Activated CD8-positive, alpha-beta memory T cell treated with anti-CD3 and anti-CD28 coated beads, Interleukin-2, amount 10 ng/mL, durations not matched to agents 7 days and 5 days (primary cell): ENCODE measurements at regions of chr6 and their contacts with region 1.

Region 1: GRCh38 chr6:85460921-85461797 is 11.3 kb downstream of the NT5E start:
- DNase-seq: peak; percentile 88
- ATAC-seq: peak; percentile 74
- H3K4me3 Mint-ChIP-seq: peak overlapping the region; percentile 41
- H3K27ac Mint-ChIP-seq: peak overlapping the region; percentile 84
- H3K4me1 Mint-ChIP-seq: peaks cover 96% of the 10 kb centered on the region
- H3K27me3 Mint-ChIP-seq: peaks cover 2% of the 10 kb centered on the region

Region 2: DNA sequence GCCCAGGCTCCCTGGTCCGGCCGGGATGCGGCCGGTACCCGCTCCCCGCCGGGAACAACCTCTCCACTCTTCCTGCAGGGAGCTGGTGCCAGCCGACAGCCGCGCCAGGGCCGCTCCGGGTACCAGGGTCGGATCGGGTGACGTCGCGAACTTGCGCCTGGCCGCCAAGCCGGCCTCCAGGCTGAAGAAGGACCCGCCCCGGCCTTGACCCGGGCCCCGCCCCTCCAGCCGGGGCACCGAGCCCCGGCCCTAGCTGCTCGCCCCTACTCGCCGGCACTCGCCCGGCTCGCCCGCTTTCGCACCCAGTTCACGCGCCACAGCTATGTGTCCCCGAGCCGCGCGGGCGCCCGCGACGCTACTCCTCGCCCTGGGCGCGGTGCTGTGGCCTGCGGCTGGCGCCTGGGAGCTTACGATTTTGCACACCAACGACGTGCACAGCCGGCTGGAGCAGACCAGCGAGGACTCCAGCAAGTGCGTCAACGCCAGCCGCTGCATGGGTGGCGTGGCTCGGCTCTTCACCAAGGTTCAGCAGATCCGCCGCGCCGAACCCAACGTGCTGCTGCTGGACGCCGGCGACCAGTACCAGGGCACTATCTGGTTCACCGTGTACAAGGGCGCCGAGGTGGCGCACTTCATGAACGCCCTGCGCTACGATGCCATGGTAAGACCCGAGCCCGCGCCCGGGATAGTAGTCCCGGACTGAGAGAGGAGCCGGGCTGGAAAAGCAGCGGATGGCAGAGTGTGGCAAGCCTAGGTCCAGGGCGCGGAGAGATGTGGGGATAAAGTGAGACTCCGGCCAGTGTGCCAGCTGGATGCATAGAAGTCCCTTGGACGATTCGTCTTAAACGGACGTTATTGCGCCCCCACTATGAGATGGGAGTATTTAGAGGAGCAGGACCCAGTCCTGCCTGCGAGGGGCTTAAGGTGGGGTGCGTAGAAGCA is 11.1 kb before region 1 on chr6 and contains the start of gene NT5E:
- CTCF ChIA-PET with region 1: interaction called, 54 read pairs
- DNase-seq: peak; percentile 83
- ATAC-seq: peak; percentile 75
- H3K4me3 Mint-ChIP-seq: peak within 1 kb of the TSS; percentile 92
- H3K27ac Mint-ChIP-seq: peak within 1 kb of the TSS; percentile 94
- H3K4me1 Mint-ChIP-seq: peaks cover 58% of the 10 kb centered on the region
- H3K27me3 Mint-ChIP-seq: peaks cover 20% of the 10 kb centered on the region
- total RNA-seq, gene NT5E: 17.3 to 24.1 TPM

Region 3: DNA sequence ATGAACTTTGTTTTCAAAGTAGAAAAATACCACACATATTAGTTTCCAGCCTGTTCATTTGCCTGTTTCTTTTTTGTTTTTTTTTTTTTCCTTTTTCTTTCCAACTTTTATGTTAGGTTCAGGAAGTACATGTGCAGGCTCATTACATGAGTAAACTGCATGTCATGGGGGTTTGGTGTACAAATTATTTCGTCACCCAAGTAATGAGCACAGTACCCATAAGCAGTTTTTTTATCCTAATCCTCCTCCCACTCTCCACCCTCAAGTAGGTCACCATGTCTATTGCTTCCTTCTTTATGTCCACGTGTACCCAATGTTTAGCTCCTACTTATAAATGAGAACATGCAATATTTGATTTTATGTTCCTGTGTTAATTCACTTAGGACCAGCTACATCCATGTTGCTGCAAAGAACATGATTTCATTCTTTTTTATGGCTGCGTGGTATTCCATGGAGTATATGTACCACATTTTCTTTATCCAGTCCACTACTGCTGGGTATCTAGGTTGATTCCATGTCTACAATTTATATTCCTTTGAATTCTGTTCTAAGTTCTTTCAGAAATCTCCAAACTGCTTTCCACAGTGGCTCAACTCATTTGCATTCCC is 100.7 kb after region 1 on chr6:
- CTCF ChIA-PET with region 1: no interaction called
- DNase-seq: no peak
- ATAC-seq: no peak
- H3K4me3 Mint-ChIP-seq: no peak overlapping the region
- H3K27ac Mint-ChIP-seq: no peak overlapping the region
- H3K4me1 Mint-ChIP-seq: peaks cover 5% of the 10 kb centered on the region
- H3K27me3 Mint-ChIP-seq: no peaks in the 10 kb centered on the region